Heart left ventricle (tissue), 16 donors: ENCODE measurements at regions of chr1 and their contacts with region 1.

Region 1: DNA sequence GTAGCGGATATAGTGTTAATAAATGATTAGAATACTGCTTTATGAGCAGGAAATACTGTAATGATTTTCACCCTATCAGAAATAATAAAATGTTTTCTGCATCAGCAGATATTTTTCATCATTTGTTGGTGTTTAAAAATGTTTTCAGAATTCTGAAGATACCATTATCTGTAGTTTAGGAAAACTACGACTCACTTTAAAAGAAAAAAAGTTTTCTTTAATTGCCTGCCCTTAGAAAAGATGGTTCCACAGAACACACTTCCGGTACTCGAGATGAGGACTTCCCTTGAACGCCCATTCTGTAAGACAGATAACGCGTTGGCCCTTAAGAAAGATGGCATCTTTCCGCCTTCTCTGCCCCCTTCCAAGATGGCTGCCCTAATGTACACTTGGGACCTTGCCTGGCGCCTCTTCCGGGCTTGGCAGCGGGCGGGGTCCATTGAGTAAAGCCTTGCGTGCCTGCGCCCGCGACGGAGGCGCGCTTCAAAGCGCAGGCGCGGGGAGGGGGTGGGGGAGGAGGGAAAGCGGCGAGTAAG is at the start of gene SZRD1:
- DNase-seq: peak; percentile 96 to 98 (median 97)
- ATAC-seq: peak; percentile 90 to 95 (median 93)
- H3K4me3 ChIP-seq: peak within 1 kb of the TSS; percentile 46 to 98 (median 80)
- H3K27ac ChIP-seq: peak within 1 kb of the TSS; percentile 83 to 100 (median 97)
- H3K4me1 ChIP-seq: peaks cover 0 to 67% (median 23%) of the 10 kb centered on the region in 12 donors
- H3K27me3 ChIP-seq: no peaks in the 10 kb centered on the region
- CTCF ChIP-seq: no peak
- POLR2A ChIP-seq: no peak
- total RNA-seq, gene SZRD1: 57.4 to 130 (median 94.4) TPM

Region 2: DNA sequence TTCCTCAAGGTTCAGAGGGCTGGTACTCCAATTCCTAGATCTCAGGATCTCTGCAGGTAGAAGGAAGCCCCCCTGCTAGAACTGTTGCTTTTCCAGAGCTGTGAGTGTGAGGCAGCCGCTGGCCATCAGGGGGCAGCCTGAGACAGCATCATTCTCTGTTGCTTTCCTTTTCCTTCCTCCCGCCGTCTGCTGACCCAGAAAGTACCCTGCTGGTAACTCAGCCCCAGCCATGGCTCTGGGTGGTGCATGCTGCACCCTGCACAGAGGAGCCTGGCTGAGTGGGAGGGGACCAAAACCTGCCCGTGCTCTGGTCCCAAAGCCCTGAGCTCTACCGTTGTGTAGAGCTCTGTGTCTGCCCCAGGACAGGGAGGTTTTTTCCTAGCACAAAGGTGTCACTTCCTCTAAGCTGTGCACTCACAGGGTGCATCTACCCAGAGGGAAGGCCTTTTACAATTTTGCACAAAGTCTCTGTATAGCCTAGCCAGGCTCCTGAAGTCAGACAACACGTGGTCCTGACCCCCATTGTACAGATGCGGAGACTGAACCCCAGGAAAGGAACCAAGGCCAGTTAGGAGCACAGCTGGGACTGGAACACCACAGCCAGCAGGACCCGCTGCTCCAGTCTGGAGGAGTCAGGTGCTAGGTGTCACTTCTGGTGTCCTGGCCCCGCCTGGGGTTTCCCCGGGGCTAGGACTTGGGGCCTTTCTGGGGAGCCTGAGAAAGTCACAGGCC is 287.7 kb before region 1 on chr1:
- intact Hi-C with region 1: loop called (anchors 1 to 5 kb)
- DNase-seq: peak; percentile 69 to 83 (median 76)
- ATAC-seq: peak; percentile 37 to 71 (median 58)
- H3K4me3 ChIP-seq: peak overlapping the region in 1 of 12 donors; percentile 34
- H3K27ac ChIP-seq: peak overlapping the region in 3 of 12 donors; percentile 18 to 50 (median 46)
- H3K4me1 ChIP-seq: peaks cover 0 to 50% (median 18%) of the 10 kb centered on the region in 12 donors
- H3K27me3 ChIP-seq: peaks cover 0 to 4% (median 0%) of the 10 kb centered on the region in 9 donors
- CTCF ChIP-seq: peak; percentile 73 to 95 (median 88)
- POLR2A ChIP-seq: no peak

Region 3: GRCh38 chr1:16243936-16244649 is 122.7 kb before region 1 on chr1:
- intact Hi-C with region 1: loop called in 2 of 10 experiments (anchors 5 kb)
- DNase-seq: peak; percentile 64 to 80 (median 74)
- ATAC-seq: peak in 3 of 4 donors; percentile 34 to 43 (median 37)
- H3K4me3 ChIP-seq: no peak overlapping the region
- H3K27ac ChIP-seq: peak overlapping the region in 4 of 12 donors; percentile 17 to 48 (median 26)
- H3K4me1 ChIP-seq: peaks cover 5 to 39% (median 26%) of the 10 kb centered on the region in 12 donors
- H3K27me3 ChIP-seq: no peaks in the 10 kb centered on the region
- CTCF ChIP-seq: peak; percentile 74 to 86 (median 80)
- POLR2A ChIP-seq: no peak

Region 4: GRCh38 chr1:16440470-16441281 is 73.9 kb after region 1 on chr1 and contains the start of gene NECAP2:
- intact Hi-C with region 1: loop called in 2 of 10 experiments (anchors 1 to 5 kb)
- DNase-seq: peak; percentile 93 to 97 (median 95)
- ATAC-seq: peak; percentile 89 to 97 (median 96)
- H3K4me3 ChIP-seq: peak within 1 kb of the TSS; percentile 59 to 99 (median 98)
- H3K27ac ChIP-seq: peak within 1 kb of the TSS; percentile 58 to 98 (median 86)
- H3K4me1 ChIP-seq: peaks cover 0 to 54% (median 29%) of the 10 kb centered on the region in 12 donors
- H3K27me3 ChIP-seq: no peaks in the 10 kb centered on the region
- CTCF ChIP-seq: peak; percentile 81 to 98 (median 92)
- POLR2A ChIP-seq: peak in 1 of 2 donors; percentile 59
- total RNA-seq, gene NECAP2: 10.7 to 53.0 (median 12.1) TPM